ENCODE measurements at regions of chr12 and their contacts with region 1.

Region 1: GRCh38 chr12:42589465-42590329 is at the start of gene PRICKLE1:
- DNase-seq: peak; percentile 78
- total RNA-seq, gene PRICKLE1: 34.3 TPM

Region 2: DNA sequence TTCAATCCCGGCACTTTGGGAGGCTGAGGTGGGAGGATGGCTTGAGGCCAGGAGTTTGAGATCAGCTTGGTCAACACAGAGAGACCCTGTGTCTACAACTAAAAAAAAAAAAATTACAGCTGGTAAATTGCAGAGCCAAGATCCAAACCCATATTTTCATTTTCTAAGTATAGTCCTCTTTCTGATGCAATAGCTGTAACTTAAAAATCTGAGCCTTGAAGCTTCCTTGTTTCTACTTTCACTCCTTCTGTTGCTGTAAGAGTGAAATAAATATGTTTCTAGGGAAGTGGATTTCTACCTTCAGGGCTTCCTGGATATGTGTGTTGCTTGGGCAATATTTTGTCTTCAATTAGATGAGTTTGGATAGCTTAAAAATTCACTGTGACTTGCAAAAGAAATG is 41.8 kb after region 1 on chr12:
- intact Hi-C with region 1: loop called (anchors 5 kb)
- DNase-seq: no peak

Region 3: DNA sequence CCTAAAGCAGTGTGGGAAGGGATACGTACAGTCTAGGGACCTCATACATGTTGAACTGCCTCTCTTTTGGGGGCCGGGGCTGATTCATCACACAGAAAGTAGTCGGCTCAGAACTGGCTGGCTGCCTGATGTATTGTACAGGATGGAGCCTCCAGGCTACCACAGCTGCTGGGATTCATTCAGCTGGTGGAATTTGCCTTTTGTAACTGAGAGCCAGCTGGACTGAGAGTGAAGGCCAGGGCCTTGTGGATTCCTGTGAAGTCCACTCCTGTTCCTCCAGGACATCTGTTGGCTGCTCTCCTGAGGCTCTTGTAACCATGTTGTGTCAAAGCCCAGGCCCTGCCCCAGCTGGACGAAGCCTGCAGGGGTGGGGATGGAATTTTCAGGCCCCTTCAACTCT is 116.2 kb after region 1 on chr12:
- intact Hi-C with region 1: no loop called
- DNase-seq: peak; percentile 78

Region 4: GRCh38 chr12:42789808-42790760 is 200.4 kb after region 1 on chr12:
- intact Hi-C with region 1: loop called (anchors 5 kb)
- DNase-seq: no peak

Region 5: GRCh38 chr12:42893802-42894201 is 304.1 kb after region 1 on chr12:
- intact Hi-C with region 1: no loop called
- DNase-seq: no peak

Region 6: GRCh38 chr12:43282106-43282505 is 692.4 kb after region 1 on chr12:
- intact Hi-C with region 1: loop called (anchors 5 kb)
- DNase-seq: no peak